Testis (tissue), 5 donors: ENCODE measurements at regions of chr18 and their contacts with region 1.

Region 1: DNA sequence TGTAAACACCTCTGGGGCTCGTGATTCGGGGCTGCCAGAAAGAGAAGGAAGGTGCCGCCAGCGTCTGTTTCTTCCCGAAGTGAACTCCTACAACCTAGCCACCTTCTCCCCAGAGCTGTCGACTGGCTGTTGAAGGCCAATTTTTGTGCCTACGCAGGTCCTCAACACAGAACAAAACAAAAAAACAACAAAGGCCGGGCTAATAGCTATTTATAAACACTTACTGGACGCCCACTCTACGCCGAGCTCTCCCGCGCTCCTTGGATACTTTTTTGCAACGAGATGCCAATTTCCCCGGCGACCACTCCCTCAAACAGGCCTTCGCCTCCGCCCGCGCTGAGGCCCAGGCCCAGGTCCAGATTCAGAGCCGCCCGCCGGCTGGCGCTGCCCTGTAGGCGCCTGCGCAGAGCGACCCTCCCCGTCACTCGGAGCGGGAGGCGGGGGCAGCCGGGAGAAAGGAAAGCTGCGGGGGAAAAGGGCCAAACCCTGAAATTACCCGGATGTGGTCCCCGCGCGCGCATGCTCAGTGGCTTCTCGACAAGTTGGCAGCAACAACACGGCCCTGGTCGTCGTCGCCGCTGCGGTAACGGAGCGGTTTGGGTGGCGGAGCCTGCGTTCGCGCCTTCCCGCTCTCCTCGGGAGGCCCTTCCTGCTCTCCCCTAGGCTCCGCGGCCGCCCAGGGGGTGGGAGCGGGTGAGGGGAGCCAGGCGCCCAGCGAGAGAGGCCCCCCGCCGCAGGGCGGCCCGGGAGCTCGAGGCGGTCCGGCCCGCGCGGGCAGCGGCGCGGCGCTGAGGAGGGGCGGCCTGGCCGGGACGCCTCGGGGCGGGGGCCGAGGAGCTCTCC is at the start of gene SMAD4:
- DNase-seq: peak; percentile 95
- H3K4me3 ChIP-seq: peak within 1 kb of the TSS; percentile 70 to 96
- H3K27ac ChIP-seq: peak within 1 kb of the TSS; percentile 91 to 100
- H3K4me1 ChIP-seq: peaks cover 20% of the 10 kb centered on the region
- H3K27me3 ChIP-seq: no peaks in the 10 kb centered on the region
- CTCF ChIP-seq: no peak
- POLR2A ChIP-seq: peak; percentile 87
- total RNA-seq, gene SMAD4: 198 to 270 TPM

Region 2: GRCh38 chr18:50967714-50968661 is 61.9 kb before region 1 on chr18 and contains the start of gene ELAC1:
- intact Hi-C with region 1: loop called (anchors 5 kb)
- DNase-seq: peak; percentile 82
- H3K4me3 ChIP-seq: peak within 1 kb of the TSS; percentile 95 to 97
- H3K27ac ChIP-seq: peak within 1 kb of the TSS; percentile 97 to 99
- H3K4me1 ChIP-seq: peaks cover 13% of the 10 kb centered on the region
- H3K27me3 ChIP-seq: no peaks in the 10 kb centered on the region
- CTCF ChIP-seq: peak in 1 of 3 experiments; percentile 16
- POLR2A ChIP-seq: no peak
- total RNA-seq, gene ELAC1: 12.0 to 16.9 TPM

Region 3: DNA sequence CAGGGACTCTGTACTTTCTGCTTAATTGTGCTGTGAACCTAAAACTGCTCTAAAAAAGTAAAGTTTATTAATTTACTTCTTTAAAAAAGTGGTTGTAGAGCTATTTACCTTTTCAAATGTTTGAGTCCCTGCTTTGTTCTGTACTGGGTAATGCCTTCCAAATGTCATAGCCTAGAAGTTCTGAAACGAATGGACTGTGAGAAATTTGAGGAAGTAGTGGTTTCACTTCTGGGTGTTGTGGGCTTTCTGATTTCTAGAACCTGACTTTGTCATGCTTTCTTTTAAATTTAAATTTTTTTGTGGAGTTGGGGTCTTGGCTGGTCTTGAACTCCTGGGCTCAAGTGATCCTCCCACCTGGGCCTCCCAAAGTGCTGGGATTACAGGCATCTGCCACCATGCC is 44.7 kb after region 1 on chr18:
- intact Hi-C with region 1: no loop called
- DNase-seq: no peak
- H3K4me3 ChIP-seq: no peak overlapping the region
- H3K27ac ChIP-seq: no peak overlapping the region
- H3K4me1 ChIP-seq: peaks cover 5% of the 10 kb centered on the region
- H3K27me3 ChIP-seq: no peaks in the 10 kb centered on the region
- CTCF ChIP-seq: no peak
- POLR2A ChIP-seq: no peak

Region 4: GRCh38 chr18:51727780-51728179 is 697.9 kb after region 1 on chr18:
- intact Hi-C with region 1: no loop called
- DNase-seq: no peak
- H3K4me3 ChIP-seq: no peak overlapping the region
- H3K27ac ChIP-seq: no peak overlapping the region
- H3K4me1 ChIP-seq: no peaks in the 10 kb centered on the region
- H3K27me3 ChIP-seq: no peaks in the 10 kb centered on the region
- CTCF ChIP-seq: no peak
- POLR2A ChIP-seq: no peak